Heart right ventricle (tissue), 16 donors: ENCODE measurements at regions of chr1 and their contacts with region 1.

Region 1: GRCh38 chr1:1200851-1201810 is 5.3 kb downstream of the TNFRSF18 start:
- DNase-seq: peak; percentile 56 to 70
- ATAC-seq: peak; percentile 21 to 87 (median 66)
- H3K4me3 ChIP-seq: peak overlapping the region; percentile 21 to 57 (median 48)
- H3K27ac ChIP-seq: peak overlapping the region in 6 of 10 donors; percentile 26 to 73 (median 62)
- H3K4me1 ChIP-seq: peaks cover 0 to 17% (median 11%) of the 10 kb centered on the region in 9 donors
- H3K27me3 ChIP-seq: peaks cover 0 to 46% (median 22%) of the 10 kb centered on the region in 7 donors
- CTCF ChIP-seq: no peak

Region 2: DNA sequence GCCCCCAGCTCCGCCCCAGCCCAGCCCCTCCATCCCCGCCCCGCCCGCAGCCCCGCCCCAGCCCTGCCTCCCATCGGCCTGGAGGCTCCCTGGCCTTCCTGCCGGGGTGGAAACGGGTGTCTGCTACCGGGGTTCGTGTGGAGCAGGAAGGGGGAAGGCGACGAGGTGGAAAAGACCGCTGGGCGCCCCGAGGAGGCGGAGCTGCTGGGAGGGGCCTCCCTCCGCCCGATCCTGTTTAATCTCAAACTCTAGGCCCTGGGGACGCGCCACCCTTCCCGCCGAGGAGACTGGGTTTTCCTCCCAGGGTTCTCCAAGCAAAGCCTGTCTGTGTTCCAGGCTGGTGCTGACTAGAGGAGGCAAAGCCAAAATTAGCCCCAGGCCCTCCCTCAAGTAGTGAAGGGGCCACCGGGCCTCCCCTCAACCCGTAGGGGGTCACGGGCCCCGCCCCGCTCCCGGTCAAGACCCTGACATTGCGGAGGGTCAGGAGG is 43.7 kb before region 1 on chr1:
- intact Hi-C with region 1: loop called in 1 of 10 experiments (anchors 5 kb)
- DNase-seq: peak; percentile 90 to 92
- ATAC-seq: peak; percentile 89 to 96 (median 92)
- H3K4me3 ChIP-seq: peak overlapping the region; percentile 52 to 85 (median 74)
- H3K27ac ChIP-seq: peak overlapping the region; percentile 89 to 99 (median 98)
- H3K4me1 ChIP-seq: peaks cover 0 to 17% (median 13%) of the 10 kb centered on the region in 9 donors
- H3K27me3 ChIP-seq: peaks cover 0 to 15% (median 12%) of the 10 kb centered on the region in 7 donors
- CTCF ChIP-seq: no peak